Activated CD8-positive, alpha-beta memory T cell treated with anti-CD3 and anti-CD28 coated beads, Interleukin-2, amount 10 ng/mL, durations not matched to agents 7 days and 5 days (primary cell): ENCODE measurements at regions of chr20 and their contacts with region 1.

Region 1: GRCh38 chr20:40990542-40991120 is 38.0 kb upstream of the TOP1 start:
- DNase-seq: peak; percentile 88
- ATAC-seq: peak; percentile 94
- H3K4me3 Mint-ChIP-seq: no peak overlapping the region
- H3K27ac Mint-ChIP-seq: peak overlapping the region; percentile 87
- H3K4me1 Mint-ChIP-seq: peaks cover 51% of the 10 kb centered on the region
- H3K27me3 Mint-ChIP-seq: no peaks in the 10 kb centered on the region

Region 2: DNA sequence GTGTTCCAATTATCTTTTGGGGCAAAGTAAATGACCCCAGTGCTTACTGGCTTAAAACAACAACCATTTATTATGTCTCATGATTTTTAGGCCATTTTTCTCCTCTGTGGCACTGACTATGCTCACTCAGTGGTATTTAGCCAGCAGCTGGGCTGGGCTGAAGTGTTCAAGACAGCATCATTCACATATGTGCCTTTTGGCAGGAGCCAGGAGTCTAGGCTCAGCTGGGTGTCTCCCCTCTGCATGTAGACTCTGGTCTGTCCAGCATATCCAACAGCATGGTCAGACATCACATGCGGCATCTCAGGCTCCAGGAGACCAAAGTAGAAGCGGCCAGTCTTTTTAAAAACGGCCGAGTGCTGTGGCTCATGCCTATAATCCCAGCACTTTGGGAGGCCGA is 82.3 kb before region 1 on chr20:
- CTCF ChIA-PET with region 1: no interaction called
- DNase-seq: no peak
- ATAC-seq: no peak
- H3K4me3 Mint-ChIP-seq: no peak overlapping the region
- H3K27ac Mint-ChIP-seq: no peak overlapping the region
- H3K4me1 Mint-ChIP-seq: peaks cover 7% of the 10 kb centered on the region
- H3K27me3 Mint-ChIP-seq: peaks cover 8% of the 10 kb centered on the region

Region 3: GRCh38 chr20:40938020-40938419 is 52.6 kb before region 1 on chr20:
- CTCF ChIA-PET with region 1: no interaction called
- DNase-seq: no peak
- ATAC-seq: no peak
- H3K4me3 Mint-ChIP-seq: no peak overlapping the region
- H3K27ac Mint-ChIP-seq: no peak overlapping the region
- H3K4me1 Mint-ChIP-seq: peaks cover 12% of the 10 kb centered on the region
- H3K27me3 Mint-ChIP-seq: peaks cover 9% of the 10 kb centered on the region

Region 4: GRCh38 chr20:40970201-40970600 is 20.4 kb before region 1 on chr20:
- CTCF ChIA-PET with region 1: interaction called, 27 read pairs
- DNase-seq: peak; percentile 38
- ATAC-seq: no peak
- H3K4me3 Mint-ChIP-seq: no peak overlapping the region
- H3K27ac Mint-ChIP-seq: no peak overlapping the region
- H3K4me1 Mint-ChIP-seq: peaks cover 18% of the 10 kb centered on the region
- H3K27me3 Mint-ChIP-seq: peaks cover 41% of the 10 kb centered on the region

Region 5: DNA sequence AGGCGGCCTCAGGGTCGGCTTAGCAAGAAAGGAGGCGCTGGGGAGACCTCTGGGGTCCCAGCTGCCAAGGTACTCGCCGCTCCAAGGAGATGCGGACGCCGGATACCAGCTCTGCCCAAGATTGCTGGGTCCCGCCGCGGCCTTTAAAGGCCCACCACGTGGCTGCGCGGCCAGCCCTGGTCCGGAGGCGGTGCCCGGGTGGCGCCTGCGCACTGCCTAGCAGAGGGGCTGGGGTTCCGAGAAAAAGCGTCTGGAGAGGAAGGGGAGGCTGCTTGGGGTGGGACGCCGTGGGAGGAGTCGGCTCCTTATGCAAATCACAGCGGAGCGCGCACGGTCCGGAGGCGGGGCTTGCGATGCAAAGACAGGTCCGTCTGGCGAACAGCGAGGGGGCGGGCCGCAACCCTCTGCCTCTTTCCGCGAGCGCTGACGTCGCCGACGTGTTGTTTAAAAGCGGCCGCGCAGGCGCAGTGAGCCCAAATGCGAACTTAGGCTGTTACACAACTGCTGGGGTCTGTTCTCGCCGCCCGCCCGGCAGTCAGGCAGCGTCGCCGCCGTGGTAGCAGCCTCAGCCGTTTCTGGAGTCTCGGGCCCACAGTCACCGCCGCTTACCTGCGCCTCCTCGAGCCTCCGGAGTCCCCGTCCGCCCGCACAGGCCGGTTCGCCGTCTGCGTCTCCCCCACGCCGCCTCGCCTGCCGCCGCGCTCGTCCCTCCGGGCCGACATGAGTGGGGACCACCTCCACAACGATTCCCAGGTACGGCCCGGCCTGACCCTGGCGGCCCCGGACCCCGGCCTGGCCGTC is 37.9 kb after region 1 on chr20 and contains the start of gene TOP1:
- CTCF ChIA-PET with region 1: interaction called, 11 read pairs
- DNase-seq: peak; percentile 100
- ATAC-seq: peak; percentile 97
- H3K4me3 Mint-ChIP-seq: peak within 1 kb of the TSS; percentile 85
- H3K27ac Mint-ChIP-seq: peak within 1 kb of the TSS; percentile 93
- H3K4me1 Mint-ChIP-seq: peaks cover 46% of the 10 kb centered on the region
- H3K27me3 Mint-ChIP-seq: peaks cover 2% of the 10 kb centered on the region
- total RNA-seq, gene TOP1: 73.1 to 89.0 TPM

Region 6: GRCh38 chr20:41047975-41048305 is 57.3 kb after region 1 on chr20:
- CTCF ChIA-PET with region 1: interaction called, 33 read pairs
- DNase-seq: no peak
- ATAC-seq: peak; percentile 69
- H3K4me3 Mint-ChIP-seq: peak overlapping the region; percentile 74
- H3K27ac Mint-ChIP-seq: peak overlapping the region; percentile 95
- H3K4me1 Mint-ChIP-seq: peaks cover 86% of the 10 kb centered on the region
- H3K27me3 Mint-ChIP-seq: no peaks in the 10 kb centered on the region

Region 7: DNA sequence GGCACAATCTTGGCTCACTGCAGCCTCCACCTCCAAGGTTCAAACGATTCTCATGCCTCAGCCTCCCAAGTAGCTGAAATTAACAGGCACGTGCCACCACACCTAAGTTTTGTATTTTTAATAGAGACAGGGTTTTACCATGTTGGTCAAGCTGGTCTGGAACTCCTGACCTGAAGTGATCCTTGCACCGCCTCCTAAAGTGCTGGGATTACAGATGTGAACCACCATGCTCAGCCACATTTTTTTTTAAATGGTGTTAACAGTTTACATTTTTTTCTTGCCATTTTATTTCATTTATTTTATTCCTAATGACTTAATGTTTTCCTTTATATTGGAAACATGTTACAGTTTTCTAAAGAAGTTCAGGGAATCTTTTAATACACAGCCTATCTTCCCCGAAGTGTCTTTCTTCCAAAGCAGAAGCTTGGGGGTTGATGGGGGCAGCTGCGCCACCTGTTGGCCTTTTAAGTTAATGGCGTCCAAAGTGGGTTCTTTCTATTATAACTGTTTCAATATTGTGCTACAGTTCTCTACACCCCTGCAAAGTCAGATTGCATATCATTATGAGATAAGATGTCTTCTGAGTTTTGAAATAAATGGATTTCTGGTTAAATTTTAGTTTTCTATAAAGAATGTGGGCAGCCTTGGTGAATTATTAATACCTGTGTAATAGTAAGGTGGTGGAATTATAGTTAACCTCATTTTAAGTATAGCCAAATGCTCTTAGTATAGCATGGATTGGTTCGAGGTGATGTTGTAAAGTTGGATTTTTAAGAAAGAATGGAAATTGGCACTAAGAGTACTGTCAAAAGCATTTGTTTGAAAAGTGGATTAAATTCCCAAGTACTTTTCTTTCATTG is 104.7 kb after region 1 on chr20:
- CTCF ChIA-PET with region 1: interaction called, 195 read pairs
- DNase-seq: peak; percentile 69
- ATAC-seq: peak; percentile 77
- H3K4me3 Mint-ChIP-seq: no peak overlapping the region
- H3K27ac Mint-ChIP-seq: no peak overlapping the region
- H3K4me1 Mint-ChIP-seq: peaks cover 5% of the 10 kb centered on the region
- H3K27me3 Mint-ChIP-seq: no peaks in the 10 kb centered on the region